ENCODE measurements at regions of chr10 and their contacts with region 1.

Region 1: GRCh38 chr10:124719213-124719851 is 24.8 kb downstream of the FAM53B start:
- DNase-seq: peak; percentile 81 to 89 (median 84)
- H3K4me3 ChIP-seq: peak overlapping the region in 1 of 2 donors; percentile 19
- H3K4me3 Mint-ChIP-seq: peak overlapping the region; percentile 59 to 83 (median 72)
- H3K27ac ChIP-seq: peak overlapping the region; percentile 81
- H3K27ac Mint-ChIP-seq: peak overlapping the region; percentile 87 to 98 (median 96)
- H3K4me1 ChIP-seq: peaks cover 100% of the 10 kb centered on the region
- H3K4me1 Mint-ChIP-seq: peaks cover 79 to 97% (median 89%) of the 10 kb centered on the region in 4 donors
- H3K27me3 ChIP-seq: no peaks in the 10 kb centered on the region
- H3K27me3 Mint-ChIP-seq: no peaks in the 10 kb centered on the region

Region 2: DNA sequence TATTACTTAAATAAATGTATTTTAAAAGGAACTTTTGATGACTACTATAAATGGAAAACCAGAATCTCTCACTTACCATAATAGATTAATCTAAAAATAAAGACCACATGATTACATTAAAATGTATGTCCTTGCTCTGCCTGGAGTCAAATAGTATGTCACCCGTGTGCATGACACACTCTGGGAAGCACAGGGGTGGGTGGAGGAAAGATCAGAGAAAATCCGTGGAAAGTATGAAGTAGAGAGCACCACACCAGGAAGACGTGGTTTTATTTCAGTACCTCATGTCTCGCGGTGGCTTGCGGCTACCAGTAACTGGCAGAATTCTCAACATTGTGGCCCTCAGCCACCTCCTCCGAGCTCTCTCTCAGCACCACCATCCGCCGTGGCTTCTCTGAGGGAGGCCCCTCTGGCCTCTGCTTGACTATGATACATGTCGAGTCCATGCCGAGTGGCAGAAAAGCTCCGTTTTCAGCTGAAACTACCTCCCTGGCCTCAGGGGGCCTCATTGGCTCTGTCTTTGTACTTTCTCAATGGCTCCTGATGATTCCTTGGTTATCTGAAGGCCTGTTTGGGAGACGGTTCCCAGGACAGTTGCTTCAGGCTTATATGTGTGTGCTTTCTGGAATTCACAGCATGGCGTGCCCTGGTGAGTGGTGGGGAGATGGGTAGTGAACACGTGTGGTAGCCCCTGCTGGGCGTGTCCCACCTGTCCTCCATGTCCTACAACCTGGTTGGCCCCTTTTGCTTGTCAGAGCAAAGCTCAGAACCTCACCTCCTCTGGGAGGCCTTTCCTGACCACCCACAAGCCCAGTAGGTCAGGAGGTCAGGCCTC is 207.9 kb before region 1 on chr10:
- CTCF ChIA-PET with region 1: no interaction called
- POLR2A ChIA-PET with region 1: no interaction called
- intact Hi-C with region 1: no loop called
- DNase-seq: no peak
- H3K4me3 ChIP-seq: no peak overlapping the region
- H3K4me3 Mint-ChIP-seq: peak overlapping the region in 1 of 8 donors; percentile 55
- H3K27ac ChIP-seq: no peak overlapping the region
- H3K27ac Mint-ChIP-seq: peak overlapping the region in 2 of 7 donors; percentile 3 to 57
- H3K4me1 ChIP-seq: no peaks in the 10 kb centered on the region
- H3K4me1 Mint-ChIP-seq: peaks cover 0 to 2% (median 0%) of the 10 kb centered on the region in 4 donors
- H3K27me3 ChIP-seq: no peaks in the 10 kb centered on the region
- H3K27me3 Mint-ChIP-seq: no peaks in the 10 kb centered on the region

Region 3: GRCh38 chr10:124632064-124632531 is 87.2 kb before region 1 on chr10:
- CTCF ChIA-PET with region 1: interaction called, 50 read pairs
- POLR2A ChIA-PET with region 1: interaction called, 31 read pairs
- intact Hi-C with region 1: loop called (anchors 1 kb)
- DNase-seq: peak in 1 of 5 donors; percentile 37
- H3K4me3 ChIP-seq: no peak overlapping the region
- H3K4me3 Mint-ChIP-seq: no peak overlapping the region
- H3K27ac ChIP-seq: no peak overlapping the region
- H3K27ac Mint-ChIP-seq: peak overlapping the region in 6 of 7 donors; percentile 13 to 83 (median 62)
- H3K4me1 ChIP-seq: peaks cover 75% of the 10 kb centered on the region
- H3K4me1 Mint-ChIP-seq: peaks cover 45 to 95% (median 65%) of the 10 kb centered on the region in 4 donors
- H3K27me3 ChIP-seq: no peaks in the 10 kb centered on the region
- H3K27me3 Mint-ChIP-seq: no peaks in the 10 kb centered on the region

Region 4: GRCh38 chr10:124657806-124658205 is 61.5 kb before region 1 on chr10:
- CTCF ChIA-PET with region 1: interaction called, 200 read pairs
- POLR2A ChIA-PET with region 1: interaction called, 297 read pairs
- intact Hi-C with region 1: no loop called
- DNase-seq: peak; percentile 60 to 79 (median 77)
- H3K4me3 ChIP-seq: peak overlapping the region; percentile 13 to 36
- H3K4me3 Mint-ChIP-seq: peak overlapping the region; percentile 31 to 87 (median 78)
- H3K27ac ChIP-seq: peak overlapping the region; percentile 67
- H3K27ac Mint-ChIP-seq: peak overlapping the region; percentile 88 to 98 (median 95)
- H3K4me1 ChIP-seq: peaks cover 92% of the 10 kb centered on the region
- H3K4me1 Mint-ChIP-seq: peaks cover 68 to 97% (median 84%) of the 10 kb centered on the region in 4 donors
- H3K27me3 ChIP-seq: no peaks in the 10 kb centered on the region
- H3K27me3 Mint-ChIP-seq: no peaks in the 10 kb centered on the region

Region 5: GRCh38 chr10:124688889-124689670 is 30.3 kb before region 1 on chr10:
- CTCF ChIA-PET with region 1: interaction called, 120 read pairs
- POLR2A ChIA-PET with region 1: interaction called, 49 read pairs
- intact Hi-C with region 1: no loop called
- DNase-seq: peak; percentile 50 to 81 (median 52)
- H3K4me3 ChIP-seq: no peak overlapping the region
- H3K4me3 Mint-ChIP-seq: peak overlapping the region in 7 of 8 donors; percentile 9 to 88 (median 76)
- H3K27ac ChIP-seq: peak overlapping the region; percentile 42
- H3K27ac Mint-ChIP-seq: peak overlapping the region; percentile 87 to 98 (median 91)
- H3K4me1 ChIP-seq: peaks cover 95% of the 10 kb centered on the region
- H3K4me1 Mint-ChIP-seq: peaks cover 59 to 94% (median 79%) of the 10 kb centered on the region in 4 donors
- H3K27me3 ChIP-seq: no peaks in the 10 kb centered on the region
- H3K27me3 Mint-ChIP-seq: no peaks in the 10 kb centered on the region

Region 6: GRCh38 chr10:124708922-124709520 is 10.3 kb before region 1 on chr10:
- CTCF ChIA-PET with region 1: interaction called, 201 read pairs
- POLR2A ChIA-PET with region 1: interaction called, 544 read pairs
- intact Hi-C with region 1: loop called (anchors 1 kb)
- DNase-seq: peak in 1 of 5 donors; percentile 53
- H3K4me3 ChIP-seq: no peak overlapping the region
- H3K4me3 Mint-ChIP-seq: peak overlapping the region in 7 of 8 donors; percentile 40 to 77 (median 57)
- H3K27ac ChIP-seq: peak overlapping the region; percentile 90
- H3K27ac Mint-ChIP-seq: peak overlapping the region; percentile 90 to 97 (median 95)
- H3K4me1 ChIP-seq: peaks cover 97% of the 10 kb centered on the region
- H3K4me1 Mint-ChIP-seq: peaks cover 78 to 93% (median 86%) of the 10 kb centered on the region in 4 donors
- H3K27me3 ChIP-seq: no peaks in the 10 kb centered on the region
- H3K27me3 Mint-ChIP-seq: no peaks in the 10 kb centered on the region

Region 7: GRCh38 chr10:124898471-124898870 is 179.1 kb after region 1 on chr10:
- CTCF ChIA-PET with region 1: no interaction called
- POLR2A ChIA-PET with region 1: no interaction called
- intact Hi-C with region 1: no loop called
- DNase-seq: no peak
- H3K4me3 ChIP-seq: no peak overlapping the region
- H3K4me3 Mint-ChIP-seq: no peak overlapping the region
- H3K27ac ChIP-seq: no peak overlapping the region
- H3K27ac Mint-ChIP-seq: no peak overlapping the region
- H3K4me1 ChIP-seq: no peaks in the 10 kb centered on the region
- H3K4me1 Mint-ChIP-seq: no peaks in the 10 kb centered on the region
- H3K27me3 ChIP-seq: no peaks in the 10 kb centered on the region
- H3K27me3 Mint-ChIP-seq: peaks cover 6 to 17% of the 10 kb centered on the region in 2 donors